ENCODE measurements at regions of chrX and their contacts with region 1.

Region 1: DNA sequence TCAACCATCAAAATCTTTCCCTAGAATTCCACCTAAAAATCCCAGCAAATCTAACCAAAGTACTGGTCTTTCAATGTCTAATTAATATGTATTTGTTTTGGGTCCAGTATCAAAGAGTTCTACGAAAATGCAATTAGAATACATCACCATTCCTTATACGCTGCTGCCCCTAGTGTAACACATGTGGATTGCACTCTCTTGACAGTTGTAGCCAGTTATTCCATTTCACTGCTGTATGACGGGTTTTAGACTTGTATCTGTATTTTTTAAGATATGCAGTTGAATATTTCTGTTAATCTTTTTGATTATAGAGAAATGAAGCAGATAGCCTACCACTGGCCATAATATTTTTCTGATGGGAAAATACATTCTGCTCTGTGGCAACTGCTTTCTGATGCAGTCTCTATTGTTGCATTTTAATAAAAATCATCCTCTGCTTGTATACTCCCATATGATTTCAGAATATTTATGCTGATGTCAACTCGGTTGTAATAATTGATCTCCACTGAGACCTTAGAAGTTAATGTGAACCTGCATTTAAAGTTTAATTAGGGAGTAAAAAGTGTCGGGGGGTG is 17.1 kb upstream of the PAGE2B start:
- DNase-seq: no peak
- ATAC-seq: peak; percentile 80
- H3K4me3 ChIP-seq: peak overlapping the region in 1 of 2 donors; percentile 26
- H3K27ac ChIP-seq: no peak overlapping the region
- H3K4me1 ChIP-seq: peaks cover 0 to 1% of the 10 kb centered on the region in 2 donors
- H3K27me3 ChIP-seq: no peaks in the 10 kb centered on the region

Region 2: GRCh38 chrX:53317365-53318069 is 1740.2 kb before region 1 on chrX:
- intact Hi-C with region 1: loop called in 1 of 2 experiments (anchors 10 kb)
- DNase-seq: peak; percentile 76 to 88
- ATAC-seq: peak; percentile 75
- H3K4me3 ChIP-seq: no peak overlapping the region
- H3K27ac ChIP-seq: no peak overlapping the region
- H3K4me1 ChIP-seq: no peaks in the 10 kb centered on the region
- H3K27me3 ChIP-seq: no peaks in the 10 kb centered on the region

Region 3: GRCh38 chrX:54639346-54640102 is 418.2 kb before region 1 on chrX:
- intact Hi-C with region 1: loop called in 1 of 2 experiments (anchors 5 kb)
- DNase-seq: peak; percentile 97 to 98
- ATAC-seq: peak; percentile 98
- H3K4me3 ChIP-seq: no peak overlapping the region
- H3K27ac ChIP-seq: peak overlapping the region; percentile 49 to 68
- H3K4me1 ChIP-seq: no peaks in the 10 kb centered on the region
- H3K27me3 ChIP-seq: no peaks in the 10 kb centered on the region

Region 4: GRCh38 chrX:54891573-54891972 is 166.2 kb before region 1 on chrX:
- intact Hi-C with region 1: loop called in 1 of 2 experiments (anchors 5 kb)
- DNase-seq: no peak
- ATAC-seq: no peak
- H3K4me3 ChIP-seq: no peak overlapping the region
- H3K27ac ChIP-seq: no peak overlapping the region
- H3K4me1 ChIP-seq: no peaks in the 10 kb centered on the region
- H3K27me3 ChIP-seq: no peaks in the 10 kb centered on the region